Posterior vena cava (tissue), 2 donors: ENCODE measurements at regions of chr5 and their contacts with region 1.

Region 1: GRCh38 chr5:93062548-93062947 is 518.5 kb downstream of the NR2F1-AS1 start:
- DNase-seq: no peak

Region 2: DNA sequence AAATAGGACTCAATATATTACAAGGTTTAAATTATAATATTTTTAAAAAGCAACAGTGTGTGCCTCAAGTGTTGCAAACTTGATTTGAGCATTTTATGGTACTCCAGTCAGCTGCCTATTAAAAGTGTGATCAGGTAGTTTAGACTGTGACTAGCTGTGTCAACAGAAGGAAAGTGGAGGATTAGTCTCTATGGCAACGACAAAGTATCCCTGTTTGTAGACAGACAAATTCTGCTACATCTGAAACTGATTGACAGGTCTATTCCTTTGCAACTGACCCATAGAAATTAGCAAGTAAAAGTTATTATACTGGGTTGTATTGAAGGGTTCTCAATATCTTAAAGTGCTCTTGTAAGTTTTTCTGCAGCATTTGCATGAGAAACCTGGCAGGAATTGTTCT is 1429.7 kb before region 1 on chr5:
- intact Hi-C with region 1: loop called in 1 of 2 experiments (anchors 5 kb)
- DNase-seq: no peak

Region 3: GRCh38 chr5:93044859-93045666 is 17.5 kb before region 1 on chr5:
- intact Hi-C with region 1: loop called in 1 of 2 experiments (anchors 1 kb)
- DNase-seq: no peak